Ascending aorta (tissue), 2 donors: ENCODE measurements at regions of chr17 and their contacts with region 1.

Region 1: GRCh38 chr17:40113110-40113906 is 8.5 kb upstream of the MSL1 start:
- DNase-seq: peak; percentile 86 to 96
- H3K4me3 ChIP-seq: peak overlapping the region; percentile 47 to 57
- H3K27ac ChIP-seq: peak overlapping the region; percentile 90 to 97
- H3K4me1 ChIP-seq: peaks cover 37 to 53% of the 10 kb centered on the region in 2 donors
- H3K27me3 ChIP-seq: no peaks in the 10 kb centered on the region
- CTCF ChIP-seq: peak; percentile 82 to 96 (median 84)

Region 2: GRCh38 chr17:39920218-39921210 is 192.8 kb before region 1 on chr17:
- intact Hi-C with region 1: no loop called
- DNase-seq: peak in 1 of 2 donors; percentile 55
- H3K4me3 ChIP-seq: no peak overlapping the region
- H3K27ac ChIP-seq: no peak overlapping the region
- H3K4me1 ChIP-seq: peaks cover under 1 to 3% of the 10 kb centered on the region in 2 donors
- H3K27me3 ChIP-seq: no peaks in the 10 kb centered on the region
- CTCF ChIP-seq: no peak

Region 3: DNA sequence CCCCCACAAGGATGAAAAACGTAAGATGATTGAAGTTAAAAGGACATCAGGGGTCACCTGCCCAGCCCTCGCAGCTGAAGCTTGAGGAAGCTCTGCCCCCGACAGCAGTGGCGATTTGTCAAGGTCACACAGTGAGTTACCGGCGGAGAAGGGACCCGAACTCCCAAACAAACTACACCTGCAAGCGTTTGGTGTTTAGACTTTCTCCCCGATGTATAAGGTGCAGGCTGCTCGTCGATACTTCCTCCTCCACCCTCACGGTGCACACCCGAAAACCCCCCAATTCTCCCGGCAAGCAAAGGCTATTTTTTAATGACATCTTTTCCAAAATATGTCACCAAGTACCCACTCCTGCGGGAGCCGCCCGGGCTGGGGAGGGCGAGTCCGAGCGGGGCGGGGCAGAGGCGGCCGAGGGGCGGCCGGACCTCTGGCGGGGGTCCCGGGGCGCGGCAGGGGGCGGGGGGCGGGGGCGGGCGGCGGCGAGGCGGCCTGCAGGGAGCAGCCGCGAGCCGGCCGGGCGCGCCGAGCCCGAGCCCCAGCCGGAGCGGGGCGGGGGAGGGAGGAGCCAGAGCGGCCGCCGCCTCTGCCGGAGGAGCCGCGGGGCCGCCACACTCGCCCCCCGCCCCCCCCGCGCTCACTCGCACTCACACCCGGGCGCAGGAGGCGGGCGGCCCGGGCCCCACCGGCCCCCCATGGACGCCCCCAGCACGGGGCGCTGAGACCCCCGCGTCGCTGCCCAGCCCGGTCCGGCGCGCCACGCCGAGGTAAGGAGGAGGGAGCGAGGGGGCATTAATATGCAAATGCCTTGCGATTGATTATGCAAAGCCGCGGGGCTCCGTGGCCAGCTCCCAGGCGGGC is 50.8 kb before region 1 on chr17 and contains the start of gene THRA:
- intact Hi-C with region 1: loop called (anchors 1 kb)
- DNase-seq: peak in 1 of 2 donors; percentile 83
- H3K4me3 ChIP-seq: peak within 1 kb of the TSS; percentile 93 to 100
- H3K27ac ChIP-seq: peak within 1 kb of the TSS; percentile 86 to 91
- H3K4me1 ChIP-seq: peaks cover 10 to 33% of the 10 kb centered on the region in 2 donors
- H3K27me3 ChIP-seq: no peaks in the 10 kb centered on the region
- CTCF ChIP-seq: peak in 1 of 3 experiments; percentile 39
- total RNA-seq, gene THRA: 35.4 TPM

Region 4: GRCh38 chr17:40091691-40092397 is 21.5 kb before region 1 on chr17:
- intact Hi-C with region 1: loop called (anchors 2 kb)
- DNase-seq: no peak
- H3K4me3 ChIP-seq: no peak overlapping the region
- H3K27ac ChIP-seq: peak overlapping the region; percentile 91 to 99
- H3K4me1 ChIP-seq: peaks cover 25 to 63% of the 10 kb centered on the region in 2 donors
- H3K27me3 ChIP-seq: no peaks in the 10 kb centered on the region
- CTCF ChIP-seq: no peak

Region 5: DNA sequence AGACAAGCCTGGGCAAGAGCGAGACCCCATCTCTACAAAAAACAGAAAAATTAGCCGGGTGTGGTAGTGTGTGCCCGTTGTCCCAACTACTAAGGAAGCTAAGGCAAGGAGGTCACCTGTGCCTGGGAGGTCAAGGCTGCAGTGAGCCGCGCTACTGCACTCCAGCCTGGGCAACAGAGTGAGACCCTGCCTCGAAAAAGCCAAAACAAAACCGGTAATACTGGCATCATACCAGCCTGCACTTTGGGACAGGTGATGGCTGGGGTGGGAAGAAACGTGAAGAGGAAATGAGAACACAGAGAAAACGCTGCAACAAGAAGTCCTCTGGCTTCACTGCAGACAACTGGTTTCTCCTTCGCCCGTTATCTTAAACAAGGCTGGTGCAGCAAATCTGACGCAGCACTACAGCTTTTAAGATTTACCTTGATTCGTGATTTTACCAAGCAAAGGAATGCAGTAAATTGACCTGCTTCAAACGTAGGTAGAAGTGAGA is 26.3 kb after region 1 on chr17:
- intact Hi-C with region 1: loop called (anchors 1 kb)
- DNase-seq: no peak
- H3K4me3 ChIP-seq: peak overlapping the region; percentile 82 to 97
- H3K27ac ChIP-seq: peak overlapping the region; percentile 91 to 99
- H3K4me1 ChIP-seq: peaks cover 14 to 15% of the 10 kb centered on the region in 2 donors
- H3K27me3 ChIP-seq: no peaks in the 10 kb centered on the region
- CTCF ChIP-seq: no peak